ENCODE measurements at regions of chr3 and their contacts with region 1.

Region 1: GRCh38 chr3:67783281-67784250 is 129.2 kb upstream of the SUCLG2 start:
- DNase-seq: no peak
- H3K4me3 ChIP-seq: no peak overlapping the region
- H3K27ac ChIP-seq: no peak overlapping the region
- H3K4me1 ChIP-seq: no peaks in the 10 kb centered on the region
- H3K27me3 ChIP-seq: no peaks in the 10 kb centered on the region
- CTCF ChIP-seq: no peak
- POLR2A ChIP-seq: no peak

Region 2: GRCh38 chr3:67113802-67114407 is 669.7 kb before region 1 on chr3:
- intact Hi-C with region 1: loop called in 1 of 2 experiments (anchors 10 kb)
- DNase-seq: peak; percentile 82 to 96 (median 87)
- H3K4me3 ChIP-seq: no peak overlapping the region
- H3K27ac ChIP-seq: no peak overlapping the region
- H3K4me1 ChIP-seq: no peaks in the 10 kb centered on the region
- H3K27me3 ChIP-seq: no peaks in the 10 kb centered on the region
- CTCF ChIP-seq: peak; percentile 79 to 93 (median 88)
- POLR2A ChIP-seq: no peak

Region 3: GRCh38 chr3:67737140-67737539 is 46.4 kb before region 1 on chr3:
- intact Hi-C with region 1: no loop called
- DNase-seq: no peak
- H3K4me3 ChIP-seq: no peak overlapping the region
- H3K27ac ChIP-seq: no peak overlapping the region
- H3K4me1 ChIP-seq: no peaks in the 10 kb centered on the region
- H3K27me3 ChIP-seq: no peaks in the 10 kb centered on the region
- CTCF ChIP-seq: no peak
- POLR2A ChIP-seq: no peak

Region 4: GRCh38 chr3:67957268-67957667 is 173.7 kb after region 1 on chr3:
- intact Hi-C with region 1: no loop called
- DNase-seq: no peak
- H3K4me3 ChIP-seq: no peak overlapping the region
- H3K27ac ChIP-seq: no peak overlapping the region
- H3K4me1 ChIP-seq: no peaks in the 10 kb centered on the region
- H3K27me3 ChIP-seq: no peaks in the 10 kb centered on the region
- CTCF ChIP-seq: no peak
- POLR2A ChIP-seq: no peak

Region 5: GRCh38 chr3:68025189-68025588 is 241.6 kb after region 1 on chr3:
- intact Hi-C with region 1: no loop called
- DNase-seq: no peak
- H3K4me3 ChIP-seq: no peak overlapping the region
- H3K27ac ChIP-seq: no peak overlapping the region
- H3K4me1 ChIP-seq: no peaks in the 10 kb centered on the region
- H3K27me3 ChIP-seq: no peaks in the 10 kb centered on the region
- CTCF ChIP-seq: no peak
- POLR2A ChIP-seq: no peak

Region 6: DNA sequence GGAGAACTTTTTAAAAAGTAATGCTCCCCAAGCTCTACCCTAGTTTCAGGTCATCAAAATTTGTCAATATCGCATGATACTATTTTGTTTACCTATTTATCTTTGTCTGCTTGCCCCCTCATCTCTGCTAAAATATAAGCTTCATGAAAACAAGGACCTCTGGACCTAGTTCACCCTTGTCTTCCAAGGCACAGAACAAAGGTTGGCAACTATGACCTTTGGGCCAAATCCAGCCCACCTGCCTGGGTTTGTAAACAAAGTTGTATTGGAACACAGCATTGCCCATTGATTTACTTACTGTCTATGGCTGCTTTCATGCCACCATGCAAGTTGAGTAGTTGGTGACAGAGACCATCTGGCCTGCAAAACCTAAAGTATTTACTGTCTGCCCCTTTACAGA is 333.0 kb after region 1 on chr3:
- intact Hi-C with region 1: no loop called
- DNase-seq: no peak
- H3K4me3 ChIP-seq: no peak overlapping the region
- H3K27ac ChIP-seq: no peak overlapping the region
- H3K4me1 ChIP-seq: no peaks in the 10 kb centered on the region
- H3K27me3 ChIP-seq: no peaks in the 10 kb centered on the region
- CTCF ChIP-seq: no peak
- POLR2A ChIP-seq: no peak

Measured in adrenal gland (tissue), 19 donors.